T-cell (primary cell): ENCODE measurements at regions of chr13 and their contacts with region 1.

Region 1: GRCh38 chr13:43094901-43095300 is 71.5 kb downstream of the DNAJC15 start:
- DNase-seq: no peak
- ATAC-seq: no peak
- H3K4me3 ChIP-seq: no peak overlapping the region
- H3K4me3 Mint-ChIP-seq: no peak overlapping the region
- H3K27ac ChIP-seq: no peak overlapping the region
- H3K27ac Mint-ChIP-seq: peak overlapping the region in 1 of 2 donors; percentile 17
- H3K4me1 ChIP-seq: no peaks in the 10 kb centered on the region
- H3K4me1 Mint-ChIP-seq: peaks cover 7 to 25% (median 16%) of the 10 kb centered on the region in 3 donors
- H3K27me3 ChIP-seq: no peaks in the 10 kb centered on the region
- H3K27me3 Mint-ChIP-seq: no peaks in the 10 kb centered on the region

Region 2: DNA sequence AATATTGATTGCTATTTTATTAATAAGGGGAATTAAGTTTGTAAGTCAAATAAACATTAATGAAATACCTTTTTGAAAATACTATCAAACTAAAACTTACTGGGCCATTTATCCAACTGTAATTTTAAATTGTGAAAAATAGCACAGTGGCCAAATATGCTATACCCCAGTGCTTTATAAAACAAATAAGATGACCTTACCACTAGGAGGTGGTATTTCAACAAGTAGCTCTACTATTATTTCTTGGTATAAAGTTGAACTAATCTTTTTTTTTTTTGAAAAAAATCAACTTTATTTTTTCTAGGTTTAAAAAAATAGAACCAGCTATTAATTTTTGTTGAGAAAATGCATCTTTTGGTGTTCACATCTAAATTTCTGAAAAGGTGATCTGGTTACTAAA is 799.5 kb after region 1 on chr13:
- CTCF ChIA-PET with region 1: interaction called in 1 of 2 experiments, 12 read pairs
- POLR2A ChIA-PET with region 1: no interaction called
- DNase-seq: no peak
- ATAC-seq: no peak
- H3K4me3 ChIP-seq: no peak overlapping the region
- H3K4me3 Mint-ChIP-seq: no peak overlapping the region
- H3K27ac ChIP-seq: no peak overlapping the region
- H3K27ac Mint-ChIP-seq: no peak overlapping the region
- H3K4me1 ChIP-seq: no peaks in the 10 kb centered on the region
- H3K4me1 Mint-ChIP-seq: no peaks in the 10 kb centered on the region
- H3K27me3 ChIP-seq: no peaks in the 10 kb centered on the region
- H3K27me3 Mint-ChIP-seq: peaks cover under 1 to 8% of the 10 kb centered on the region in 2 donors